ENCODE measurements at regions of chr4 and their contacts with region 1.

Region 1: GRCh38 chr4:80202190-80202711 is 4.9 kb downstream of the PRDM8 start:
- DNase-seq: peak; percentile 77
- H3K4me3 ChIP-seq: peak overlapping the region; percentile 43 to 48 (median 47)
- H3K27ac ChIP-seq: no peak overlapping the region
- H3K4me1 ChIP-seq: peaks cover 18% of the 10 kb centered on the region
- H3K27me3 ChIP-seq: peaks cover 36 to 45% of the 10 kb centered on the region in 2 experiments
- CTCF ChIP-seq: peak; percentile 76 to 84
- POLR2A ChIP-seq: no peak

Region 2: DNA sequence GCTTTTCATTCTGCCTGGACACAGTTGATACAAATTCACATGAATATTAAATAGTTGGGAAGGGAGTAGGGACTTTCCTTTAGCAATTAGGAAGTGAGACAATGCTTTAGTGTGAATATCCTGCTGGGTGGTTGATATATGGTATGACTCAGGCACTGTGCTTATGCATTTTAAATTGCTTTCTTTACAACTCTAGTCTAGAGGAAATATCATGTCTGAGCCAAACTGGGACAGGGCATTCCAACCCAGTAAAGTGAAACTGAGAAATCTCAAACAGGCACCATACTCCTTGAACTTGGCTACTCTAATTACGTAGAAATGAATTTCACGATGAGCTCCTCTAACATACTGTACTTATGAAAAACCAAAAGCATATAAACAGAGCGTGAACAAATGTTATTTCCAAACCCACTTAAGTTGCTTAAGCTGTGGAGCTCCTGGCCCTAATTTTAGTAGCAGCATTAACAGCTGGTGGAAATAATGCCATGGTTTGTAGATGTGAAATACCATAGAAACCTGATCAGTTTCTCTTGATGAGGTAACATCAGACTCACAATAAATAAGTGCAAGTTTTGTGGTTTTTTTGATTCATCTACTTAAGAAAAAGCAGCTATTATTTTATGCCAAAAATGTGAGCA is 551.3 kb before region 1 on chr4:
- CTCF ChIA-PET with region 1: no interaction called
- POLR2A ChIA-PET with region 1: no interaction called
- dilution Hi-C with region 1: no loop called
- intact Hi-C with region 1: loop called (anchors 5 kb)
- DNase-seq: peak; percentile 96
- H3K4me3 ChIP-seq: peak overlapping the region in 1 of 3 experiments; percentile 3
- H3K27ac ChIP-seq: peak overlapping the region; percentile 87
- H3K4me1 ChIP-seq: peaks cover 29% of the 10 kb centered on the region
- H3K27me3 ChIP-seq: no peaks in the 10 kb centered on the region
- CTCF ChIP-seq: no peak
- POLR2A ChIP-seq: no peak

Region 3: GRCh38 chr4:80072744-80073472 is 129.3 kb before region 1 on chr4 and contains the start of gene ANTXR2:
- CTCF ChIA-PET with region 1: interaction called, 20 read pairs
- POLR2A ChIA-PET with region 1: no interaction called
- dilution Hi-C with region 1: no loop called
- intact Hi-C with region 1: loop called (anchors 2 kb)
- DNase-seq: peak; percentile 84
- H3K4me3 ChIP-seq: peak within 1 kb of the TSS; percentile 62 to 95 (median 88)
- H3K27ac ChIP-seq: peak within 1 kb of the TSS; percentile 82
- H3K4me1 ChIP-seq: peaks cover 43% of the 10 kb centered on the region
- H3K27me3 ChIP-seq: no peaks in the 10 kb centered on the region
- CTCF ChIP-seq: no peak
- POLR2A ChIP-seq: peak; percentile 78
- total RNA-seq, gene ANTXR2: 64.6 and 71.9 TPM in 2 replicates

Region 4: GRCh38 chr4:80184053-80184790 is 18.0 kb before region 1 on chr4:
- CTCF ChIA-PET with region 1: interaction called, 93 read pairs
- POLR2A ChIA-PET with region 1: interaction called, 4 read pairs
- dilution Hi-C with region 1: no loop called
- intact Hi-C with region 1: loop called (anchors 1 kb)
- DNase-seq: peak; percentile 58
- H3K4me3 ChIP-seq: peak overlapping the region; percentile 56 to 99 (median 68)
- H3K27ac ChIP-seq: no peak overlapping the region
- H3K4me1 ChIP-seq: peaks cover 27% of the 10 kb centered on the region
- H3K27me3 ChIP-seq: peaks cover 43 to 48% of the 10 kb centered on the region in 2 experiments
- CTCF ChIP-seq: peak; percentile 83 to 91
- POLR2A ChIP-seq: no peak

Region 5: GRCh38 chr4:80266253-80266901 is 64.1 kb after region 1 on chr4 and contains the start of gene FGF5:
- CTCF ChIA-PET with region 1: interaction called, 16 read pairs
- POLR2A ChIA-PET with region 1: no interaction called
- dilution Hi-C with region 1: no loop called
- intact Hi-C with region 1: no loop called
- DNase-seq: peak; percentile 38
- H3K4me3 ChIP-seq: peak within 1 kb of the TSS; percentile 30 to 76 (median 64)
- H3K27ac ChIP-seq: peak within 1 kb of the TSS; percentile 49
- H3K4me1 ChIP-seq: peaks cover 12% of the 10 kb centered on the region
- H3K27me3 ChIP-seq: peaks cover 77 to 91% of the 10 kb centered on the region in 2 experiments
- CTCF ChIP-seq: no peak
- POLR2A ChIP-seq: no peak
- total RNA-seq, gene FGF5: 0.13 and 1.7 TPM in 2 replicates

Region 6: DNA sequence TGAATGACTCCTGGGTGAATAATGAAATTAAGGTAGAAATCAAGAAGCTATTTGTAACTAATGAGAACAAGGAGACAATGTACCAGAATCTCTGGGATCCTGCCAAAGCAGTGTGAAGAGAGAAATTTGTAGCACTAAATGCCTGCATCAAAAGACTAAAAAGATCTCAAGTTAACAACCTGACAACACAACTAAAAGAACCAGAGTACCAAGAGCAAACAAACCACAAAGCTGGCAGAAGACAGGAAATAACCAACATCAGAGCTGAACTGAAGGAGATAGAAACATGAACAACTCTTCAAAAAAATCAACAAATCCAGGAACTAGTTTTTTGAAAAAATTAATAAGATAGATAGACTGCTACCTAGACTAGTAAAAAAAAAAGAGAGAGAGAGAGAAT is 141.6 kb after region 1 on chr4:
- CTCF ChIA-PET with region 1: no interaction called
- POLR2A ChIA-PET with region 1: no interaction called
- dilution Hi-C with region 1: no loop called
- intact Hi-C with region 1: no loop called
- DNase-seq: no peak
- H3K4me3 ChIP-seq: no peak overlapping the region
- H3K27ac ChIP-seq: no peak overlapping the region
- H3K4me1 ChIP-seq: no peaks in the 10 kb centered on the region
- H3K27me3 ChIP-seq: peaks cover 0 to 2% of the 10 kb centered on the region in 2 experiments
- CTCF ChIP-seq: no peak
- POLR2A ChIP-seq: no peak

Measured in endothelial cell of umbilical vein (primary cell).